ENCODE measurements at regions of chr2 and their contacts with region 1.

Region 1: DNA sequence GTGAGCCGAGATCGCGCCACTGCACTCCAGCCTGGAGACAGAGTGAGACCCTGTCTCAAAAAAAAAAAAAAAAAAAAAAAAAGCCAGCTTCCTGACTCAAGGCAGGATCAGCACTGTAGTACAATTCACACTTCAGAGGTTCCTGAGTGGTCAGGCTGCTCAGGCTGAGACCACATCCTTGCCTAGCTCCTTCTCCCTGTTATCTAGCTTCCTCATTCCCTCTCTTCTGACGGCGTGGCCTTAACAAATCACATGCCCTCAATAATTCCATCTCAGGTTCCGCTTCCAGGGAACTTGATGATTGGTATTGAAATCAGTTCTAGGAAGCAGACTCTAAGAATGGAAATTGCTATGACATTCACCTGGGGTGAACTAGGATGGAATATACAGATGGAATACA is 29.8 kb upstream of the KDM3A start:
- DNase-seq: no peak
- H3K4me3 ChIP-seq: no peak overlapping the region
- H3K27ac ChIP-seq: no peak overlapping the region
- H3K27me3 ChIP-seq: peaks cover 2% of the 10 kb centered on the region
- CTCF ChIP-seq: no peak

Region 2: DNA sequence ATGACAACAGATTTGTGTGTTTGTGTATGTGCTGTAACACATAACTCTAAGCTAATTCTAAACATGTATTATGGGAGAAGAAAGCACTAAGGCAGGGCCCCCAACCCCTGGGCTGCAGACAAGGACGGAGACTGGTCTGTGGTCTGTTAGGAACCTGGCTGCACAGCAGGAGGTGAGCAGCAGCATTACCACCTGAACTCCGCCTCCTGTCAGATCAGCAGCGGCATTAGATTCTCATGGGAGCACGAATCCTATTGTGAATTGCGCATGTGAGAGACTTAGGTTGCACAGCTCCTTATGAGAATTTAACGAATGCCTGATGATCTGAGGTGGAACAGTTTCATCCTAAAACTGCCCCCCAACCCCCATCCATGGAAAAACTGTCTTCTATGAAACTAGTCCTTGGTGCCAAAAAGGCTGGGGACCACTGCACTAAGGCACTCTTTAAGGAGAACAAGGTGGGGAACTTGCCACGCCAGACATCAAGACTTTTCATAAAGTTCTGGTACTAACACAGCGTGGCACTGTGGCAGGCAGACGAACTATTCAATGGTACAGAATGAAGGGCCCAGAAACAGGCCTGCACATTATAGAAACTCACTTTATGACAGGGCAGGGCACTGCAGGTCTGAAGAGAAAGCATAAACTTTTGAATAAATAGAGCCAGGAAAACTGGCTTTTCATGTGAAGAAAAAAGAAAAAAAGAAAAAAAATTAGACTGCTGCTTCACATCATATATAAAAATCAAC is 87.9 kb before region 1 on chr2:
- CTCF ChIA-PET with region 1: interaction called, 10 read pairs
- POLR2A ChIA-PET with region 1: no interaction called
- DNase-seq: no peak
- H3K4me3 ChIP-seq: no peak overlapping the region
- H3K27ac ChIP-seq: no peak overlapping the region
- H3K27me3 ChIP-seq: peaks cover 4% of the 10 kb centered on the region
- CTCF ChIP-seq: no peak

Region 3: GRCh38 chr2:86396291-86396785 is 15.1 kb before region 1 on chr2:
- CTCF ChIA-PET with region 1: no interaction called
- POLR2A ChIA-PET with region 1: no interaction called
- DNase-seq: no peak
- H3K4me3 ChIP-seq: no peak overlapping the region
- H3K27ac ChIP-seq: no peak overlapping the region
- H3K27me3 ChIP-seq: no peaks in the 10 kb centered on the region
- CTCF ChIP-seq: peak; percentile 39